Testis (tissue), 5 donors: ENCODE measurements at regions of chr3 and their contacts with region 1.

Region 1: GRCh38 chr3:195863121-195864006 is 45.0 kb downstream of the TNK2 start:
- DNase-seq: peak; percentile 94
- H3K4me3 ChIP-seq: no peak overlapping the region
- H3K27ac ChIP-seq: peak overlapping the region in 1 of 2 donors; percentile 50
- H3K4me1 ChIP-seq: peaks cover 4% of the 10 kb centered on the region
- H3K27me3 ChIP-seq: no peaks in the 10 kb centered on the region
- CTCF ChIP-seq: peak; percentile 82 to 88 (median 82)
- POLR2A ChIP-seq: no peak

Region 2: DNA sequence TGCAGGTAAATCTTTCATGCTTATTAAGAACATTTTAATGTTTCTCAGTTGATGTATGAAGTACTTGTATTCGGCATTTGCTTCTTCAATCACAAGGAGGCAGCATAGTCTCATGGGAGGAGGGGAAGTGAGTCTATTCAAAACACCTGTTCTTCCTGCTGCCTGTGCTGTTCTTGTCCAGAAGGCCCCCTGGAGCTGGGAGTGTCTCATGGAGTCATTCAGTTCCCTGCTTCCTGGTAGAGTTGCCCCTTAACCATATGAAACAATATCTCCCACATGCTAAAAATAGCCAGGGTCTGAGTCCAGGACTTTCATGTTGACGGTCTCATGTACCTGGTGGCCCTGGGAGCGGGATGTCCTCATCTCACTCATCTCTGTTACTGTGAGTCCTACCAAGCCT is 304.8 kb before region 1 on chr3:
- intact Hi-C with region 1: no loop called
- DNase-seq: no peak
- H3K4me3 ChIP-seq: no peak overlapping the region
- H3K27ac ChIP-seq: no peak overlapping the region
- H3K4me1 ChIP-seq: no peaks in the 10 kb centered on the region
- H3K27me3 ChIP-seq: no peaks in the 10 kb centered on the region
- CTCF ChIP-seq: peak in 1 of 3 experiments; percentile 19
- POLR2A ChIP-seq: no peak

Region 3: DNA sequence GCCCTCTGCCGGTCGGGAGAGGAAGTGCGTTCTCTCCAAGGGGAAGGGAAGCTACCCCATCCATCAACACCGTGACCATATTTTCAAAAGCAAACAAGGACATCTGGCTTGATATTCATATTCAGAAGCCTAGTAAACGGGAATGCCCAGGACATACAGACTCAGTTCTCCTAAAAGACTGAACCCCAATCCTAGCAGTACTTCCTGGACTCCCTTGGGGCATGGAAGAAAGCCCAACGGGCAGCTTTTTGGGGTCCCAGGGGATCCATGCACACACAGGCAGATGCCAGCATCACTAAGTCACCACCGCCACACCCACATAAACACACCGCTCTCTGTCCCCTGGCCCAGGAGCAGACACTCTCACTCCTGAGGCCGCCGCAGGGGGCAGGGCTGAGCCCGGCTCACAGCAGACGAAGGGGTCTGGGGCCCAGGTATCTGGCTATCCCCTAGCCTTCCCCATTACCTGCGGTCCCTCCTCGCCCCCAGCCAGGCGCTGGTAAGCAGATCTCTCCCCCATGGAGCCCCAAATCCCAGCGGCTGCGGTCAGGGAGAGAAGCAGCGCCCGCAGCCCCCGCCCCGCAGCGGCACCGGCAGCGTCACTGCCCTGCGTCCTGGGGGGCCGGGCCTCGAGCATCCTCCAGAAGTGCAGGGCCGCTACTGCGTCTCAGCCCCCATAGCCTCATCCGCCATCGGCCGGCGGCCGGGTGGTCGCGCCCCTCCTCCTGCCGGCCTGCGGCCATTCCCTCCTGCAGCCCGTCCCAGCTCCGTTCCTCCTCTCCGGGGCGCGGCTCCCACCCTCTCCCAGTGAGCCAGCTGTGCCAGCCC is 31.6 kb after region 1 on chr3:
- intact Hi-C with region 1: loop called (anchors 5 kb)
- DNase-seq: peak; percentile 48
- H3K4me3 ChIP-seq: peak overlapping the region; percentile 66 to 81
- H3K27ac ChIP-seq: peak overlapping the region; percentile 79 to 84
- H3K4me1 ChIP-seq: peaks cover 54% of the 10 kb centered on the region
- H3K27me3 ChIP-seq: no peaks in the 10 kb centered on the region
- CTCF ChIP-seq: peak; percentile 90 to 94 (median 94)
- POLR2A ChIP-seq: no peak

Region 4: GRCh38 chr3:195932456-195933430 is 69.4 kb after region 1 on chr3:
- intact Hi-C with region 1: no loop called
- DNase-seq: no peak
- H3K4me3 ChIP-seq: no peak overlapping the region
- H3K27ac ChIP-seq: no peak overlapping the region
- H3K4me1 ChIP-seq: no peaks in the 10 kb centered on the region
- H3K27me3 ChIP-seq: no peaks in the 10 kb centered on the region
- CTCF ChIP-seq: no peak
- POLR2A ChIP-seq: no peak